Heart right ventricle (tissue), 16 donors: ENCODE measurements at regions of chr15 and their contacts with region 1.

Region 1: GRCh38 chr15:35529784-35530183 is 16.2 kb downstream of the DPH6 start:
- DNase-seq: no peak
- ATAC-seq: no peak
- H3K4me3 ChIP-seq: no peak overlapping the region
- H3K27ac ChIP-seq: no peak overlapping the region
- H3K4me1 ChIP-seq: no peaks in the 10 kb centered on the region
- H3K27me3 ChIP-seq: no peaks in the 10 kb centered on the region
- CTCF ChIP-seq: no peak

Region 2: DNA sequence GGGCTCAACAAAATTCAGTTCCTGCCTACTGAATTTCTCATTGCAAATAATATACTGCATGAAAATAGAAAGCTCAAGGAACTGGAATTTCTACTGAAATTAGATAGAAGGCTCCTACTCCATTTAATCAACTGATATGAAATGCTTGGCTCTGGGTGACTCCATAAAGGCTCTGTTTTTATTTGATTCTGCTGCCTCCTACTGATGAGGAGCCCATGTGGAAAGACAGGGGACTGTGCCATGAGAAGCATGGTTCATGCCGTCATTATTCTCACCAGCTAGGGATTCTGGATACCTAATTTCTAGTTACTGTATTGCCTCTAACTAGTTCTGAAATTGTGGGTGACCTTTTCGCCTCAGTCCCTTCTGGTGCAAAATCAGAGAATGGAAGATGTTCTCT is 382.4 kb after region 1 on chr15:
- intact Hi-C with region 1: loop called in 3 of 10 experiments (anchors 5 to 10 kb)
- DNase-seq: no peak
- ATAC-seq: peak in 5 of 8 donors; percentile 59 to 89 (median 71)
- H3K4me3 ChIP-seq: no peak overlapping the region
- H3K27ac ChIP-seq: no peak overlapping the region
- H3K4me1 ChIP-seq: peaks cover 0 to 14% (median 0%) of the 10 kb centered on the region in 9 donors
- H3K27me3 ChIP-seq: no peaks in the 10 kb centered on the region
- CTCF ChIP-seq: peak; percentile 13 to 56 (median 36)